ENCODE measurements at regions of chr2 and their contacts with region 1.

Region 1: GRCh38 chr2:134665727-134666506 is 52.9 kb downstream of the TMEM163 start:
- DNase-seq: no peak
- H3K4me3 ChIP-seq: no peak overlapping the region
- H3K27ac ChIP-seq: no peak overlapping the region
- H3K4me1 ChIP-seq: no peaks in the 10 kb centered on the region
- H3K27me3 ChIP-seq: no peaks in the 10 kb centered on the region
- CTCF ChIP-seq: no peak

Region 2: GRCh38 chr2:134603966-134604365 is 62.0 kb before region 1 on chr2:
- intact Hi-C with region 1: no loop called
- DNase-seq: no peak
- H3K4me3 ChIP-seq: no peak overlapping the region
- H3K27ac ChIP-seq: no peak overlapping the region
- H3K4me1 ChIP-seq: no peaks in the 10 kb centered on the region
- H3K27me3 ChIP-seq: no peaks in the 10 kb centered on the region
- CTCF ChIP-seq: no peak

Region 3: GRCh38 chr2:134647607-134648256 is 18.2 kb before region 1 on chr2:
- intact Hi-C with region 1: loop called (anchors 2 kb)
- DNase-seq: no peak
- H3K4me3 ChIP-seq: no peak overlapping the region
- H3K27ac ChIP-seq: no peak overlapping the region
- H3K4me1 ChIP-seq: no peaks in the 10 kb centered on the region
- H3K27me3 ChIP-seq: no peaks in the 10 kb centered on the region
- CTCF ChIP-seq: no peak